CD4-positive, alpha-beta T cell (primary cell): ENCODE measurements at regions of chr19 and their contacts with region 1.

Region 1: GRCh38 chr19:47047763-47048405 is 540 bp downstream of the TMEM160 start:
- DNase-seq: peak; percentile 24 to 86 (median 50)
- ATAC-seq: peak; percentile 38
- H3K4me3 ChIP-seq: peak overlapping the region; percentile 88
- H3K4me3 Mint-ChIP-seq: peak overlapping the region; percentile 98
- H3K27ac ChIP-seq: peak overlapping the region in 1 of 2 donors; percentile 81
- H3K27ac Mint-ChIP-seq: peak overlapping the region; percentile 54
- H3K4me1 ChIP-seq: peaks cover 16% of the 10 kb centered on the region
- H3K4me1 Mint-ChIP-seq: peaks cover 10% of the 10 kb centered on the region
- H3K27me3 ChIP-seq: no peaks in the 10 kb centered on the region
- H3K27me3 Mint-ChIP-seq: no peaks in the 10 kb centered on the region
- CTCF ChIP-seq: no peak

Region 2: GRCh38 chr19:46788262-46788967 is 259.5 kb before region 1 on chr19 and contains the start of gene SLC1A5:
- CTCF ChIA-PET with region 1: no interaction called
- POLR2A ChIA-PET with region 1: no interaction called
- intact Hi-C with region 1: loop called in 1 of 2 experiments (anchors 5 kb)
- DNase-seq: peak; percentile 90 to 99 (median 94)
- ATAC-seq: peak; percentile 80
- H3K4me3 ChIP-seq: peak within 1 kb of the TSS; percentile 76
- H3K4me3 Mint-ChIP-seq: peak within 1 kb of the TSS; percentile 93
- H3K27ac ChIP-seq: peak within 1 kb of the TSS; percentile 44 to 72
- H3K27ac Mint-ChIP-seq: peak within 1 kb of the TSS; percentile 86
- H3K4me1 ChIP-seq: peaks cover 71% of the 10 kb centered on the region
- H3K4me1 Mint-ChIP-seq: peaks cover 62% of the 10 kb centered on the region
- H3K27me3 ChIP-seq: no peaks in the 10 kb centered on the region
- H3K27me3 Mint-ChIP-seq: no peaks in the 10 kb centered on the region
- CTCF ChIP-seq: no peak
- total RNA-seq, gene SLC1A5: 7.1 TPM

Region 3: DNA sequence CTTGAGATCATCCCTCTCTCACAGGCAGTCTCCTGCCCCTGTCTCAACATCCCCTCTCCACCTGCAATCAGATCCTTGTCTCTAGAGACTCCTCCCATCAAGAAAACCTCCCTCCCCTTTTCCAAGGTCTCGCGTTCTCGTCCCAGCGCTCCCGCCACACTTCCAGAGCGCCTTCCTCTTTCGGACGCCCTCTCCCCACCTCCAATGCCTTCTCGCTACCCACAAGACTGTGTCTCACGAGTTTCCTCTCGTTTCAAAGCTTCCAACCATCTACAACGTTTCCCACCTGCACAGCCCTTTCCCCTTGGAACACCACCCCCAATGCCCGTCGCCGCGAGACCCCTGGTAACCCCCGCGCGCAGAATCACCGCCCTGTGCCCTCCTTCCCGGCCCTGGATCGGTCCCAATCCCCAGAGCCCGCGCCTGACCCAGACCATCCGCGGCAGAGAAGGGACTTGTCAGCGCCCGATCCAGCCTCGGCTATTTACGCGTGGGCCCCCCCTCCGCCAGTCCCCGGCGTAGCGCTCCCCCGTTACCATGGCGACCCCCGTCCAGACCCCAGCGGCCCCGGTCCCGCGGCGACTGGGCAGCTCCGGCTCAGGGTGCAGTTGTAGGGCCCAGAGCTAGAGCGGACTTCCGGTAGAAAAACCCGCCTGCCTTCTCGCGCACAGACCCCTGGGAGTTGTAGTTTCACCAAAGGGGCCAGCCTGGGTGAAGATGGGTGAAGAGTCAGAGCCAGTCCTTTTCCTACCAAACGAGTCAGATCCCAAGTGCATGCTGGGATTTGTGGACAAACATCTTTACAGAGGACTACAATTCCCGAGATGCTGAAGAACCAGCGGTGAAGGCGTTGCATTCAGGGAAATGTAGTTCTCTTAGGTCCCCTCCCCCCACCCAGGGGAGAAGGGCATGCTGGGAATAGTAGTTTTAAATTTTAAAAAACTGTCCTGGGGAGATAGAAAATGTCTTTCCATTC is 197.4 kb before region 1 on chr19 and contains the start of gene AP2S1:
- CTCF ChIA-PET with region 1: no interaction called
- POLR2A ChIA-PET with region 1: no interaction called
- intact Hi-C with region 1: loop called in 1 of 2 experiments (anchors 2 kb)
- DNase-seq: peak; percentile 81 to 98 (median 90)
- ATAC-seq: peak; percentile 95
- H3K4me3 ChIP-seq: peak within 1 kb of the TSS; percentile 76
- H3K4me3 Mint-ChIP-seq: peak within 1 kb of the TSS; percentile 90
- H3K27ac ChIP-seq: peak within 1 kb of the TSS; percentile 39 to 71
- H3K27ac Mint-ChIP-seq: peak within 1 kb of the TSS; percentile 62
- H3K4me1 ChIP-seq: peaks cover 17% of the 10 kb centered on the region
- H3K4me1 Mint-ChIP-seq: peaks cover 33% of the 10 kb centered on the region
- H3K27me3 ChIP-seq: no peaks in the 10 kb centered on the region
- H3K27me3 Mint-ChIP-seq: no peaks in the 10 kb centered on the region
- CTCF ChIP-seq: no peak
- total RNA-seq, gene AP2S1: 24.5 to 26.9 TPM

Region 4: DNA sequence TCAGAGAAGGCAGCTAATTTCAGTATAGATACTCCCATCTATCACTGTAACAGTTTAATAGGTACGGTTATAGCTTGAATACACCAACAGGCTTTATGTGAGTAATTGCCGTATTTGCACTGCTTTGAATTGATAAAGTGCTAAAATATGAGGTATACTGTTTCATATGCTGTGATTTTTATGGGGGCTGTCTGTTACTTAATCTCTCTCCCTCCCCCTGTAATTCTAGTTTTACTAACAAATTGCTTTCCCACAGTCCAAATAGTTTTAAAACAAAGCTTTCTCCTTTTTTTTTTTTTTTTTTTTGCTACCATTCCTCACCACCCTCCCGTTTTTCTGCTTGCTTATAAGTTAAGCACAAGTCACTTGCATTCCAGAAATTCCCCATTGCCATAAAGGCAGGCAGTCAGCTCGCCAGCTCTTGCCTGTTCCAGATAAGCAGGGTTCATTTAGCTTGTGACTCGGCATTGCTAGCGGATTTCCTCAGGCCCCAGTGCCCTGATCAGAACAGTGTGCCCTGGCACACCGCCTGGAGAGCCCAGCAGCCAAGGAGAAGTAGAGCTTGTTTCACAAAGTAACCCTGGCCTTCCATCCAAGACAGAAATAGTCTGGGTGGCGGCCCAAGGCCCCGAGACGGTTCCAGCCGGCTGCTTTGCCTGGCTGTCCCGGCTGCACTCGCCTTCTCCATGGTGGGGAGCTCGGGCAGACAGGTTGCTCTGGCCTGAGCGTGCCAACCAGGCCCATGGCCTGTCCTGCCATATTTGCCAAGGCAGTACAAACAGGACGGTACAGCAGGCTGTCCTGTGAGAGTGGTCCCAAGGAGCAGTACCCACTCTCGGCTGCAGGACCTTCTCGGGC is 71.7 kb before region 1 on chr19:
- CTCF ChIA-PET with region 1: no interaction called
- POLR2A ChIA-PET with region 1: no interaction called
- intact Hi-C with region 1: no loop called
- DNase-seq: no peak
- ATAC-seq: no peak
- H3K4me3 ChIP-seq: no peak overlapping the region
- H3K4me3 Mint-ChIP-seq: no peak overlapping the region
- H3K27ac ChIP-seq: no peak overlapping the region
- H3K27ac Mint-ChIP-seq: no peak overlapping the region
- H3K4me1 ChIP-seq: peaks cover 33% of the 10 kb centered on the region
- H3K4me1 Mint-ChIP-seq: peaks cover 20% of the 10 kb centered on the region
- H3K27me3 ChIP-seq: no peaks in the 10 kb centered on the region
- H3K27me3 Mint-ChIP-seq: no peaks in the 10 kb centered on the region
- CTCF ChIP-seq: no peak

Region 5: DNA sequence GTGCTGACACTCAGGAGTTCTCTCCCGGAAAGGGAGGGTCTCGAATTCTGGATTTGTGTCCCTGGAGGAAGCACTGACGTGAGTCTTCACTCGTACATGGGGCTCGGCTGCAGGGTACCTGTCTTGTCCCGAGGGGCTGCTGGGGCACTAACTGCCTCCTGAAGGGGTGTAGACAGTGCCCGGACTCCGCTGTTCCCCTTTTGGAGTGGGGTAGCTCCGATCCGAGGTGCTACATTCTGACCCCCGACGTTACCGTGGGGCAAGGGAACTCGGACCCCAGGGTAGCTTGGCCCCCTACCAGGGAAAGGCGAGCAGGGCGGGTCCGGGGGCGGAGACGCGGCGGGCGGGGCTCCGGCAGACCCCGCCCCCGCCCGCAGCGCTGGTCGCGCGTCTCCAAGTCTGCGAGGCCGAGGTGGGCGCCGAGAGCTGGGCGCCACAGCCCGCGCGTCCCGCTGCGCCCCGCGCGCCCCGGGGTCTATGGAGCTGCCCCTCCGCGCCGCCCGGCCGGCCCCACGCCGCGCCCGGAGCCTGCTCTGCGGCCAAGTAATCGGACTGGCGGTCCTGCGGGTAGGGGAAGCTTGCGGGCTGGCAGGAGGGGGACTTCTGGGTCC is 28.3 kb before region 1 on chr19 and contains the start of gene NPAS1:
- CTCF ChIA-PET with region 1: no interaction called
- POLR2A ChIA-PET with region 1: no interaction called
- intact Hi-C with region 1: no loop called
- DNase-seq: peak in 1 of 14 experiments; percentile 31
- ATAC-seq: no peak
- H3K4me3 ChIP-seq: no peak within 1 kb of the TSS
- H3K4me3 Mint-ChIP-seq: peak within 1 kb of the TSS; percentile 43
- H3K27ac ChIP-seq: no peak within 1 kb of the TSS
- H3K27ac Mint-ChIP-seq: no peak within 1 kb of the TSS
- H3K4me1 ChIP-seq: peaks cover 39% of the 10 kb centered on the region
- H3K4me1 Mint-ChIP-seq: peaks cover 10% of the 10 kb centered on the region
- H3K27me3 ChIP-seq: peaks cover 42 to 46% of the 10 kb centered on the region in 2 experiments
- H3K27me3 Mint-ChIP-seq: peaks cover 51% of the 10 kb centered on the region
- CTCF ChIP-seq: no peak
- total RNA-seq, gene NPAS1: 1.1 to 2.1 TPM

Region 6: DNA sequence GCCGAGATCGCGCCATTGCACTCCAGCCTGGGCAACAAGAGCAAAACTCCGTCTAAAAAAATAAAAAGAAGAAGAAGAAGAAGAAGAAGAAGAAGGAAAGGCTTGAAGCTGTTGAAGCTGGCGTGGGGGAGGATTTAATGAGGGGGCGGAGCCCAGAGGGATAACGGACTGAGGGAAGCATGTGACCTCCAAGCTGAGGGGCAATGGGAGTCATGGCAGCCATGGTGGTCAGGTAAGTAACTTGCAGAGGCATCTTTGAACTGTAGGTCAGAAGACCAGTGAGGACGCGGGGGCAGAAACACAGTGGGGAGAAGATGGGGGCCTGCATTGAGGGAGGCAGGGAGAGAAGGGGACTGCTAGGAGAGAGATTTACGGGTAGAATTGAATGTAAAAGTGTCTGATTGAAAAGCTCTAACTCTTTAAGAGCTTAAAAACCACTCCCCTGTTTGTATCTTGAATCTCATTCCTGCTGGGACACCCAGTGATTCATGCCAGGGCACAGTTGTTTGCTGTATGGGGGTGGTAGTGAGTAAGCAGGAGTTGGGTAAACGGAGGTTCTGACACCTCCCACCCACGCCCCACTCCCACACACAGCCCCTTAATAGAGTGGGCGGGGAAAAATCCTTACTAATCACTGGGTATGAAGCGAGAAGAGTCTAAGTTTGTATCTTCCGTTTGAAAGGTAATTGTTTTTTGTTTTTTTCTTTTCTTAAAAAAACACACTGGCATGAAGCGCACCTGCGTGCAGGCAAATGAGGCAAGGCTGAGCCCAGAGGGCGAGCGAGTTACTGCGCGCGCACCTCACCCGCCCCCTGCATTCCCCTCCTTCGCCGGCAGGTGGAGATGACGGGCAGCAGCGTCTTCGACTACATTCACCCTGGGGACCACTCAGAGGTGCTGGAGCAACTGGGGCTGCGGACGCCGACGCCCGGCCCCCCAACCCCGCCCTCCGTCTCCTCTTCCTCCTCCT is 12.5 kb before region 1 on chr19:
- CTCF ChIA-PET with region 1: interaction called, 4 read pairs
- POLR2A ChIA-PET with region 1: interaction called, 10 read pairs
- intact Hi-C with region 1: loop called (anchors 1 kb)
- DNase-seq: peak; percentile 88 to 99 (median 95)
- ATAC-seq: peak; percentile 96
- H3K4me3 ChIP-seq: peak overlapping the region; percentile 51
- H3K4me3 Mint-ChIP-seq: peak overlapping the region; percentile 94
- H3K27ac ChIP-seq: no peak overlapping the region
- H3K27ac Mint-ChIP-seq: peak overlapping the region; percentile 85
- H3K4me1 ChIP-seq: peaks cover 30% of the 10 kb centered on the region
- H3K4me1 Mint-ChIP-seq: peaks cover 15% of the 10 kb centered on the region
- H3K27me3 ChIP-seq: peaks cover 4 to 5% of the 10 kb centered on the region in 2 experiments
- H3K27me3 Mint-ChIP-seq: peaks cover 23% of the 10 kb centered on the region
- CTCF ChIP-seq: peak; percentile 98

Region 7: GRCh38 chr19:47063874-47064273 is 16.0 kb after region 1 on chr19:
- CTCF ChIA-PET with region 1: no interaction called
- POLR2A ChIA-PET with region 1: no interaction called
- intact Hi-C with region 1: no loop called
- DNase-seq: no peak
- ATAC-seq: no peak
- H3K4me3 ChIP-seq: no peak overlapping the region
- H3K4me3 Mint-ChIP-seq: no peak overlapping the region
- H3K27ac ChIP-seq: no peak overlapping the region
- H3K27ac Mint-ChIP-seq: no peak overlapping the region
- H3K4me1 ChIP-seq: no peaks in the 10 kb centered on the region
- H3K4me1 Mint-ChIP-seq: no peaks in the 10 kb centered on the region
- H3K27me3 ChIP-seq: no peaks in the 10 kb centered on the region
- H3K27me3 Mint-ChIP-seq: no peaks in the 10 kb centered on the region
- CTCF ChIP-seq: no peak

Region 8: GRCh38 chr19:47765523-47766358 is 717.9 kb after region 1 on chr19:
- CTCF ChIA-PET with region 1: no interaction called
- POLR2A ChIA-PET with region 1: no interaction called
- intact Hi-C with region 1: no loop called
- DNase-seq: peak in 11 of 14 experiments; percentile 17 to 66 (median 37)
- ATAC-seq: peak; percentile 50
- H3K4me3 ChIP-seq: no peak overlapping the region
- H3K4me3 Mint-ChIP-seq: no peak overlapping the region
- H3K27ac ChIP-seq: no peak overlapping the region
- H3K27ac Mint-ChIP-seq: no peak overlapping the region
- H3K4me1 ChIP-seq: no peaks in the 10 kb centered on the region
- H3K4me1 Mint-ChIP-seq: peaks cover 13% of the 10 kb centered on the region
- H3K27me3 ChIP-seq: no peaks in the 10 kb centered on the region
- H3K27me3 Mint-ChIP-seq: no peaks in the 10 kb centered on the region
- CTCF ChIP-seq: peak; percentile 52